Head of caudate nucleus (tissue), 42 donors: ENCODE measurements at regions of chr20 and their contacts with region 1.

Region 1: DNA sequence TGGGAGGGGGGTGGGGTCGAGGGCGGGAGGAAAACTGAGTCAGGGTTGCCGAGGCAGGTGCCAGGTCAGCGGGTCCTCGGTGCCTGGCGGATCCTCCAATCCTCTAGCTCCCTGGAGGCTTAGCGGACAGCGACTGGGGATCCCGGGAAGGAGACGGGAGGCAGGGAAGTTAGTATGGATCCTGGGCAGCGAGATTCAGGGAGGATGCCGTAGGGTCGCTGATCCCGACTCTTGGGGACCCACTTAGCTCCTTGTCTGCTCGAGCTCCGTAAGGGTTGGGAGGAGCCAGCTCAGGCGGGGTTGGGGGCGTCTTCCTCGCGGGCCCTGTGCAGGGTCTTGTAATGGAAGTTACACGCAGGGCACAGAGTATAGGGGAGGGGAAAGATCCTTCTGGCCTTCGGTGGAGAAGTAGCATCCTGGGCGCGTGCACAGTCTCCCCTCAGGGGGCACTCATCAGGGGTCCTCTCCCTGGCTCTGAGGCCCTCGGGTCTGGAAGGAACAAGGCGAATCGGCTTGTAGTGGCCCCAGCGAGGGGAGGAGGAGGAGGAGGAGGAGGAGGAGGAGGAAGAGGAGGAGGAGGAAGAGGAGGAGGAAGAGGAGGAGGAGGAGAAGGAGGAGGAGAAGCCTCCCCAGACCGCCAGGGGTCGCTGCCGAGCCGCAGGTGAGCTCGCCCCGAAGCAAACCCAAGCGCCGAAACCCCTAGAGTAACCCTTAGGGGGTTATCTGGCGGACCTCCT is 6.4 kb upstream of the SLC12A5 start:
- DNase-seq: peak; percentile 59 to 90 (median 79)

Region 2: GRCh38 chr20:45892106-45892825 is 130.3 kb before region 1 on chr20:
- intact Hi-C with region 1: no loop called
- DNase-seq: peak in 10 of 42 donors; percentile 12 to 63 (median 32)

Region 3: DNA sequence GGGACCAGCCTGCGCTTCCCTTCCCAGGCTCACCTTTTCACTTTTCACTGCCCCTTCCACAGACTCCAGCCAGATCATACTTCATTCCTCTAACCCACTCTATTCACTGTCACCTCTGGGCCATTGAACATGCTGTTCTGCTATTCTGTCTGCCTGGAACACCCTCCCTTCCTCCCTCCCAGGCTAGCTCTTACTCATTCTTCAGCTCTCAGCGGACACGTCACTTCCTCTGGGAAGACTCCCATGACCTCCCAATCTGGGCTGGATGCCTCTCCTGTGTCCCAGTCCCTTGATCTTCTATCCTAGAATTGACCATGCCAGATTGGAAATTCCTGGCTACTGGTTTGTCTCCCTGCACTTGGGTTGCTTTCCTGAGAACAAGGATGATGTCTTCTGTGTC is 11.5 kb after region 1 on chr20:
- intact Hi-C with region 1: no loop called
- DNase-seq: peak in 13 of 42 donors; percentile 21 to 67 (median 48)

Region 4: DNA sequence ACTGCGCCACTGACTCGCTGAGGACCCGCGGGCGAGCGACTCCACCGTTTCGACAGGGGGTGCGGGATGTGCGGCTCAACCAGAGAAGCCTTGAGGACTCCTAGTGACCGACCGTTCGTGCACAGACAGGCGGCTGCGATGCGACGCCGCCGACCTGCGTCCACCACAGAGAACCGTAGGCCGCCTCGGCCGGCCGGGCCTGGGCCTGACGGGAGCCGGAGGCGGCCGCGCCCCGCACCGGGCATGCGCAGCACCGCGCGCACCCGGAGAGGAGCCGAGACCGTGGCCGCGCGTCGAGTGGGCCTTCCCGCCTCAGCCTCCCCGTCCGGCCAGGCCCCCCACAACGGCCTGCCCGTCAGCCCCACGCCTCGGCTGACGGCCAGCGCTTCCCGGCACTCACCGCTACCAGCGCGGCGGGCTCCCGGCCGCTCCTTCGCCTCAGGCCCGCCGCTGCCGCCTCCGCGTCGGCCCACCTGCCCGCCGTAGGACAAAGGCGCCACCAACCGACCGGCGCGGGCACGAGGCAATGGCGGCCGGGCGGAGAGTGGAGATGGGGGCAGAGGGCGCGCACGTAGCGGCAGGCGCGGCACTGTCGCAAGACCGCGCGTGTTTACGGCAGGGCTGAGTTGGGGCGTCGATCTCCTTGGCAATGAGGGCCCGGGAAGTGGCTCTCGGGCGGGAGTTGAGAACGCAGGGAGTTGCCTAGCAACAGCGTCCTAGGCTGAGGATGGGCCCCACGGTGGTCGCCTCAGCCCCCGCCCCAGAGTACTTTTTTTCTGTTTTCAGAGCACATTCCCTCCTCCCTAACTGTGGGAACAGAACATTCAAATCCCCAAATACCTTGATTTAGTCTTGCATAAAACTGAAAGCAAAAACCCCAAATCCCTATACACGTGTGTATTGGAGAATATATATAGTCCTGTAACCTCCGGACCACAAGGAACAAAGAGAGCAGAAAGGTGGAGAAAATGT is 67.1 kb after region 1 on chr20 and contains the start of gene NCOA5:
- intact Hi-C with region 1: loop called (anchors 2 kb)
- DNase-seq: peak; percentile 92 to 99 (median 97)

Region 5: DNA sequence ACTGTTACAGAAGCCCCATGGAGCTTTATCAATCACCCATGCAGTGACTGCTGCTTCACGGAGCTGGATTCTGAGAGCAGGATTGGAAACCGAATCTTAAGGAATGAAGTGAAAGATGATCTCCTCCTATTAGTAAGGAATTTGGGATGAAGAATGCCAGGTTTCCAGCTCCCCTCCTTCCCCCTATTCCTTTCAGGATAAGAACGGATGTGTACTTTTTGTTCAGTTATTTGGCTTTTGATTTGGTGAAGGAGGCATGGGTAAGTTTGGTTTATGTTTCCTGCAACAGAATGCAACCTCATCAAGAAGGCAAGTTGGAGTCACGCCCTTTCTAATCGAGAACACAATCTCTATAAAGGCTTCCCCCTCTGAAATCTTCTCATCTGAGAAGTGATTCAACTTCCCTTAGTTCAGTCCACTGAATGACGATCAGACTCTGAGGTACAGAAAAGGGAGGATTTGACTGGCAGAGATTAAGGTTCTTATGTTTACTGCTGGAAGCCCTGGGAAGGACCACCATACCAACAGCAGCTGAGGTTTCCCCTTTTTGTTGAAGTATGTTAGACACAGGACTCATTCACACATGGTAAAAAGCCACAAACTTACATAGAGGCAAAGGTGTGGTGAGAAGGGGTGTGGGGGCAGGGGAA is 378.4 kb after region 1 on chr20:
- intact Hi-C with region 1: loop called (anchors 5 kb)
- DNase-seq: no peak